PC-9 (cell line): ENCODE measurements at regions of chrX and their contacts with region 1.

Region 1: GRCh38 chrX:119041175-119041574 is 31.6 kb upstream of the CT47C1 start:
- DNase-seq: peak; percentile 63 to 93
- H3K4me3 ChIP-seq: no peak overlapping the region
- H3K27ac ChIP-seq: peak overlapping the region; percentile 33
- H3K4me1 ChIP-seq: peaks cover 53% of the 10 kb centered on the region
- H3K27me3 ChIP-seq: no peaks in the 10 kb centered on the region
- CTCF ChIP-seq: no peak

Region 2: DNA sequence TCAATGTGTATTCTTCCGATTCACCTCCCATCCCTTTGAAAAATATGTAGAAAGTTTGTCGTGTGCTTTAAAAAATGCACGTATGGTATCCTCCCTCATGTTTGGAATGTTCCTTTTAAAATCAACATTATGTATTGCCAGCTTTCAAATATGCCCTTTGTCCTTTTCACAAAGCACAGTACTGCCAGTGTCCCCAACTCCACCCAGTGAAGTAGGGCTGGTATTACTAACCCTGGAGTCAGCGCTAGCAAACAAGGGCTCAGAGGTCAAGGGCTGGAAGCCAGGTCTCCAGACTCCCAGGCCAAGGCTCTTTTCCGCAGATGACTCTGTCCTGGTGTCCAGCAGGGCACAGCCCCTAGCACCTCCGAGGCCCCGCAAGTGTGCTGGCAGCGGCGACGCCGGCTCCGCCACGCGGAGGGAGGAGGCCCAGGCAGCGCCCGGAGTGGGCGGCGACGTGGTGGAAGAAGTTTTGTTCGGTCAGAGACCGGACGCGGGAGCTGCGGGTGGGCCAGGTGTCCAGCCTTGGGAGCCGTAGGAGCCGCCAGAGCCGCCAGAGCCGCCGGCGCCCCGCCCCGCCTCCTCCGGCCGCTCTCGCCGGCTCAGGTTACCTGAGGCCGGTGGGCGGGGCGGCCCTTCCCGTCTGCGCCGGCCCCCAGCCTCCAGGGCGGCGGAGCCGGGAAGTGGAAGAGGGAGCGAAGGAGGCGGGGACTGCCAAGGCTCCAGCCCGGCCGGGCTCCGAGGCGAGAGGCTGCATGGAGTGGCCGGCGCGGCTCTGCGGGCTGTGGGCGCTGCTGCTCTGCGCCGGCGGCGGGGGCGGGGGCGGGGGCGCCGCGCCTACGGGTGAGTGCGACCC is 314.1 kb before region 1 on chrX and contains the start of gene IL13RA1:
- CTCF ChIA-PET with region 1: no interaction called
- POLR2A ChIA-PET with region 1: no interaction called
- intact Hi-C with region 1: loop called (anchors 10 kb)
- DNase-seq: peak; percentile 86 to 95
- H3K4me3 ChIP-seq: peak within 1 kb of the TSS; percentile 90
- H3K27ac ChIP-seq: peak within 1 kb of the TSS; percentile 95
- H3K4me1 ChIP-seq: peaks cover 69% of the 10 kb centered on the region
- H3K27me3 ChIP-seq: no peaks in the 10 kb centered on the region
- CTCF ChIP-seq: no peak
- total RNA-seq, gene IL13RA1: 85.3 and 106 TPM in 2 replicates

Region 3: GRCh38 chrX:118884552-118885138 is 156.5 kb before region 1 on chrX:
- CTCF ChIA-PET with region 1: no interaction called
- POLR2A ChIA-PET with region 1: interaction called, 12 read pairs
- intact Hi-C with region 1: no loop called
- DNase-seq: peak; percentile 68 to 89
- H3K4me3 ChIP-seq: peak overlapping the region; percentile 50; the same call in 1 of the 2 replicates
- H3K27ac ChIP-seq: peak overlapping the region; percentile 82
- H3K4me1 ChIP-seq: 0 out of 2 replicates have a peak, but pooled peaks cover 5% of the 10 kb centered on the region
- H3K27me3 ChIP-seq: no peaks in the 10 kb centered on the region
- CTCF ChIP-seq: no peak

Region 4: GRCh38 chrX:119015407-119016237 is 25.6 kb before region 1 on chrX:
- CTCF ChIA-PET with region 1: no interaction called
- POLR2A ChIA-PET with region 1: interaction called, 3 read pairs
- intact Hi-C with region 1: loop called (anchors 1 kb)
- DNase-seq: peak; percentile 86 to 98
- H3K4me3 ChIP-seq: no peak overlapping the region
- H3K27ac ChIP-seq: peak overlapping the region; percentile 87
- H3K4me1 ChIP-seq: peaks cover 39% of the 10 kb centered on the region
- H3K27me3 ChIP-seq: no peaks in the 10 kb centered on the region
- CTCF ChIP-seq: no peak

Region 5: GRCh38 chrX:119028733-119029330 is 12.3 kb before region 1 on chrX:
- CTCF ChIA-PET with region 1: no interaction called
- POLR2A ChIA-PET with region 1: interaction called, 28 read pairs
- intact Hi-C with region 1: no loop called
- DNase-seq: no peak
- H3K4me3 ChIP-seq: no peak overlapping the region
- H3K27ac ChIP-seq: no peak overlapping the region
- H3K4me1 ChIP-seq: no peaks in the 10 kb centered on the region
- H3K27me3 ChIP-seq: no peaks in the 10 kb centered on the region
- CTCF ChIP-seq: no peak

Region 6: DNA sequence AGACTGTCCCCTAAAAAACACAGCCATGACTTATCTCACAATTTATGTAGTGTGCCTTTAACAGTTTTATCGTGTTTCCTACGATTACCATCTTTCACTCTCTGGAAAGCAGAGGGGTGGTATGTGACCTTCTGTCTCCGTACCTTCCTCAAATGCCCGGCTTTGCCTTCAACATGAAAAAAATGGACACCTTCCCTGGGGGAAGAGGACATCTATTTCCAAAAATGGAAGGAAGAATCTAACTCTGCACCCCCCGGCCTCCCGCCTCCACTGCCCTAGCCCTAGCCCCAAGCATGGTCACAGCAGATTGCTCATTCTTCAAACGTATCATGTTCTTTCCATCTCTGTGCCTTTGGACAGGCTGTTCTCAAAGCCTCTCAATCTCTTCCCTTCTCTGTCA is 171.7 kb after region 1 on chrX:
- CTCF ChIA-PET with region 1: no interaction called
- POLR2A ChIA-PET with region 1: no interaction called
- intact Hi-C with region 1: no loop called
- DNase-seq: no peak
- H3K4me3 ChIP-seq: no peak overlapping the region
- H3K27ac ChIP-seq: no peak overlapping the region
- H3K4me1 ChIP-seq: no peaks in the 10 kb centered on the region
- H3K27me3 ChIP-seq: peaks cover 24% of the 10 kb centered on the region
- CTCF ChIP-seq: no peak